Esophagus squamous epithelium (tissue), 5 donors: ENCODE measurements at regions of chr1 and their contacts with region 1.

Region 1: DNA sequence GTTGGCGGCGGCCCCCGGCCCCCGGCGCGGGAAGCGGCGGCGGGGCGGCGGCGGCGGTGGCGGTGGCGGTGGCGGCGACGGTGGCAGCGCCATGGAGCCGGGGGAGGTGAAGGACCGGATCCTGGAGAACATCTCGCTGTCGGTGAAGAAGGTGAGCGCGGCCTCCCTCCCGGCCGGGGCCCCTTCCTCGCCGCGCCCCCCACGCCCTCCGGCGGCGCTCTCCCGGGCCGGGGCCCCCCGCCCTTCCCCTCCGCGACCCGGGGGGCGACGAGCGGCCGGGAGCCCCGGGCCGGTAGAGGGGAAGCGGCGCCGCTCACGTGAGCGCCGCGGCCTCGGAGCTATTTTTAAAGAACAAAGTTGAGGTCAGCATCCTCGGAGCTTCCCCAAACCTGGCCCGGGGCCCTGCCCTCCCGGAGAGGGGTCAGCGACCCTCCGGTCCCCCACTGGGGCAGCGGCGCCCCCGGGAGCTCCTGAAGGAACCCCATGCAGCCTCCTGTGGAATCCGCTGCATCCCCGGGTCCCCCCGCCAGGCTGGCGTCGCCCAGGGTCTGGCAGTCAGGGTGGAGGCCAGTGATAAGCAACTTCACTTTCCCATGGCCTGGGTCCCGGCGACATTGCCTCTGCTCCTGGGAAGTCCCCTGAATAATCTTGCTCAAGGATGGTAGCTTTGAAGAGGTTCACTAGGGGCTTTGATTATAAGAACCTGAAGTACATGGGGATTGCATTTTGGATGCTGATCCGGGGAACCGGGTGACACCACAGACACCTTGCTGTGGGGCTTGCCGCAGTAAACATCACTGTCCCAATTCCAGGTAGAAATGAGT is 560 bp downstream of the PLEKHM2 start:
- DNase-seq: no peak
- H3K4me3 ChIP-seq: peak overlapping the region; percentile 66 to 94 (median 90)
- H3K27ac ChIP-seq: peak overlapping the region; percentile 93 to 100 (median 96)
- H3K4me1 ChIP-seq: peaks cover 21 to 72% (median 24%) of the 10 kb centered on the region in 3 donors
- H3K27me3 ChIP-seq: no peaks in the 10 kb centered on the region
- CTCF ChIP-seq: peak in 2 of 6 experiments; percentile 7 to 28
- POLR2A ChIP-seq: peak in 1 of 4 donors; percentile 16

Region 2: GRCh38 chr1:15617175-15617880 is 67.4 kb before region 1 on chr1 and contains the start of gene DDI2:
- intact Hi-C with region 1: loop called (anchors 5 kb)
- DNase-seq: peak; percentile 94
- H3K4me3 ChIP-seq: peak within 1 kb of the TSS; percentile 55 to 99 (median 93)
- H3K27ac ChIP-seq: peak within 1 kb of the TSS; percentile 92 to 100 (median 99)
- H3K4me1 ChIP-seq: peaks cover 27 to 52% (median 42%) of the 10 kb centered on the region in 3 donors
- H3K27me3 ChIP-seq: no peaks in the 10 kb centered on the region
- CTCF ChIP-seq: no peak
- POLR2A ChIP-seq: peak in 3 of 4 donors; percentile 48 to 98 (median 96)
- total RNA-seq, gene DDI2: 20.6 to 62.9 (median 48.3) TPM